ENCODE measurements at regions of chr15 and their contacts with region 1.

Region 1: DNA sequence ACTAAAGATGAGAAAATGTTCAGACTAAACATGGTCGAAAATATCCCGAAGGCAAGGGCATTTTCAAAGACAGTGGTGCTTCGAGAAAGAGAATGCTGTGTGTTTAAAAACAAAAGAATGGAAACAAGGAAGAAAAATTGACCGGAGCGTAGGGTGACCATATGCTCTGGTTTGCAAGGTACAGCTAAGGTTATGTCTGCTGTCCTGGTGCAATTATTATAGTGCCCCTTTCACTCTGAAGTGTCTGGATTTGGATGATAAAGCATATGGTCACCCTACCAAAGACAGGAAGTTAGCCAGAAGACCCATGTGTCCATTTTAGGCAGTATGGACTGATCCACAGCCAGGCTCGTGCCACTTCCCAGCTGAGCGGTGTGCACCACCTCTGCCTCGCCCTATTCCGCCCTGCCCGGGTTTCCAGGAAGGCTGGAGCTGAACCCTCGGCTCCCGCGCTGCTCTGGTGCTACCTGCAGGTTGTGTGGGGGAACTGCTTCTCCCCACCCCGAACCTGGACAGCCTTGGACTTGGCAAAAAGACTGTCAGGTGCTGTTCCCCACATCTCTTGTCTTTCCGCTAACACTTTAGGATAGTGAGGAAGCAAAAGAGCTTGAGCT is 25.2 kb downstream of the GOLGA6D start:
- DNase-seq: peak; percentile 68 to 78 (median 68)
- ATAC-seq: peak; percentile 88 to 99 (median 94)
- H3K4me3 ChIP-seq: no peak overlapping the region
- H3K27ac ChIP-seq: no peak overlapping the region
- H3K4me1 ChIP-seq: no peaks in the 10 kb centered on the region
- H3K27me3 ChIP-seq: no peaks in the 10 kb centered on the region
- CTCF ChIP-seq: peak; percentile 48 to 67 (median 56)
- POLR2A ChIP-seq: no peak

Region 2: GRCh38 chr15:75023181-75023871 is 284.6 kb before region 1 on chr15 and contains the start of gene PPCDC:
- intact Hi-C with region 1: loop called (anchors 10 kb)
- DNase-seq: peak; percentile 97 to 98 (median 98)
- ATAC-seq: peak; percentile 97 to 99 (median 98)
- H3K4me3 ChIP-seq: peak within 1 kb of the TSS; percentile 61 to 87 (median 81)
- H3K27ac ChIP-seq: peak within 1 kb of the TSS; percentile 72 to 80 (median 76)
- H3K4me1 ChIP-seq: peaks cover 0 to 18% (median 8%) of the 10 kb centered on the region in 4 donors
- H3K27me3 ChIP-seq: no peaks in the 10 kb centered on the region
- CTCF ChIP-seq: no peak
- POLR2A ChIP-seq: peak; percentile 88
- total RNA-seq, gene PPCDC: 5.9 to 21.5 (median 8.3) TPM

Region 3: DNA sequence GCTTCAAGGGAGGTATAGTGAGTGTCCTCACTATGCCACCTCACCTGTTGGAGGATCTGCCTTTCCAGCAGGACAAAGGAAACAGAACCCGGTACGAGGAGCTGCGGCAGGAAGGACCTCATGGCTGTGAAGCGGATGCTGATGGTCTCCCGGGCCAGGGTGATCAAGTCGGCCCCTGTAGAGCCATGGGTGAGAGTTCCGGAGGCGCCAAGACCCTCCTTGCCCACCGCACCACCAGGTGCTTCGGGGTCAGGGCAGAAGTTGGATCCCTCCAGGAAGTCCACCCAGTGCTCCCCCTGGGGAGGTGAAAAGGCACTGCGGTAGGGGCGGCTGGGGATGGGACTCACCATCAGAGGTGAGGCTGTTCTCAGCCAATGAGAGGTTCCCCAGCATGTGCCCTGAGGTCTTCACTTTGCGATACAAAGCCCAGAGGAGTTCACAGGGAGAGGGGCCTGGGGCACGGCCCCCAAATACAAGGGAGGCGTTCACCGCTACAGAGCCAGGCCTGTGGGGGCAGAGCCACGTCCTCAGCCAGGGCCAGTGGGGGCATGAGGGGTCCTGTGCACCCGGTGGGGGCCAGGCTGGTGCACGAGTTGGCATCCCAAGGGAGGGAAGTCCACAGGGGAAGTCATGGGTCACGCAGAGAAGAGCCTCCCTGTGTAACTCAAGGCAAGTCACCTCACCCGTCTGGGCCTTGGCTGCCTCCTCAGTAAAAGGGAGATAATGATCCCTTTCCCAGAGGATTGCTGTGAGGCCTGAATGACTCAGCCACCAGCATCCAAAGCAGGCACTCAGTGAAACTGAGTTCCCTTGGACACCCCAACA is 78.5 kb before region 1 on chr15:
- intact Hi-C with region 1: no loop called
- DNase-seq: peak in 1 of 3 donors; percentile 33
- ATAC-seq: no peak
- H3K4me3 ChIP-seq: no peak overlapping the region
- H3K27ac ChIP-seq: no peak overlapping the region
- H3K4me1 ChIP-seq: no peaks in the 10 kb centered on the region
- H3K27me3 ChIP-seq: no peaks in the 10 kb centered on the region
- CTCF ChIP-seq: no peak
- POLR2A ChIP-seq: no peak

Measured in right lobe of liver (tissue), 6 donors.